Pancreas (tissue), 10 donors: ENCODE measurements at regions of chr12 and their contacts with region 1.

Region 1: GRCh38 chr12:22443379-22444316 is 100.7 kb downstream of the C2CD5 start:
- DNase-seq: peak in 5 of 6 donors; percentile 26 to 63 (median 45)
- ATAC-seq: peak; percentile 97 to 100 (median 99)
- H3K4me3 ChIP-seq: no peak overlapping the region
- H3K27ac ChIP-seq: no peak overlapping the region
- H3K4me1 ChIP-seq: no peaks in the 10 kb centered on the region
- H3K27me3 ChIP-seq: no peaks in the 10 kb centered on the region
- CTCF ChIP-seq: peak; percentile 38 to 65 (median 48)

Region 2: GRCh38 chr12:22083167-22083566 is 360.5 kb before region 1 on chr12:
- intact Hi-C with region 1: loop called in 1 of 3 experiments (anchors 10 kb)
- DNase-seq: no peak
- ATAC-seq: peak in 2 of 4 donors; percentile 47 to 56
- H3K4me3 ChIP-seq: no peak overlapping the region
- H3K27ac ChIP-seq: no peak overlapping the region
- H3K4me1 ChIP-seq: no peaks in the 10 kb centered on the region
- H3K27me3 ChIP-seq: no peaks in the 10 kb centered on the region
- CTCF ChIP-seq: peak in 2 of 4 donors; percentile 17

Region 3: GRCh38 chr12:22196236-22196635 is 247.4 kb before region 1 on chr12:
- intact Hi-C with region 1: no loop called
- DNase-seq: no peak
- ATAC-seq: no peak
- H3K4me3 ChIP-seq: no peak overlapping the region
- H3K27ac ChIP-seq: no peak overlapping the region
- H3K4me1 ChIP-seq: no peaks in the 10 kb centered on the region
- H3K27me3 ChIP-seq: no peaks in the 10 kb centered on the region
- CTCF ChIP-seq: no peak

Region 4: DNA sequence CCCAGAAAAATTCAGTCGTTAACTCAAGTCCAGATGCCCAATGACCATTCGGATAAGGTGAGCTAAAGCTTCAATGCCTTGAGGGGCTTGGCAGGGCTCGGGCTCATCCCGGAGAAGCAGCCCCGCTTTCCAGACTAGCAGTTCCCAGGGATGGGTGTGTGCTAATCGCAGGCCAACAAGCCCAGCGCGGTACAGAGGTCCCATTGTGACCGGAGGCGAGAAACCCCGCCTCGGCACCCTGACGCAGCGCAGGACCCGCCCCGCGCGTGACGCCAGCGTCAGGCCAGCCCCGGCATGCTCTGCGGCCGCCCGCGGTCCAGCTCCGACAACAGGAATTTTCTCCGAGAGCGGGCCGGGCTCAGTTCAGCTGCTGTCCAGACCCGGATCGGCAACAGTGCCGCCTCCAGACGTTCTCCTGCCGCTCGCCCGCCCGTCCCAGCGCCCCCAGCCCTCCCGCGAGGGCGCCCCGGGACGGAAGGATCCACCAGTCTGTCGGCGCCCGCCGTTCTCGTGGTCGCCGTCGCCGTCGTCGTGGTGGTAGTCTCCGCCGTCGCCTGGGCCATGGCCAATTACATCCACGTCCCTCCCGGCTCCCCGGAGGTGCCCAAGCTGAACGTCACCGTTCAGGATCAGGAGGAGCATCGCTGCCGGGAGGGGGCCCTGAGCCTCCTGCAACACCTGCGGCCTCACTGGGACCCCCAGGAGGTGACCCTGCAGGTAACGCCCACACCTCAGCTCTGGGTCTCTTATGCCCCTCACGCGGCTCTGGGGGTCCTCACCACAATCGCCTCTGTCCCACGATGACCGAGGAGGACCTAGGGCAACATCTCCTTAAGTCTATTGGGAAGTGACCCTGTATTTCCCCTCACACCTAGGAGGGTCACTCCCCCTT is 181.5 kb after region 1 on chr12 and contains the start of gene ETNK1:
- intact Hi-C with region 1: no loop called
- DNase-seq: peak; percentile 91 to 97 (median 94)
- ATAC-seq: peak; percentile 98 to 100 (median 99)
- H3K4me3 ChIP-seq: peak within 1 kb of the TSS; percentile 80 to 92 (median 88)
- H3K27ac ChIP-seq: peak within 1 kb of the TSS; percentile 97 to 99 (median 98)
- H3K4me1 ChIP-seq: peaks cover 2 to 42% (median 38%) of the 10 kb centered on the region in 3 donors
- H3K27me3 ChIP-seq: no peaks in the 10 kb centered on the region
- CTCF ChIP-seq: no peak
- total RNA-seq, gene ETNK1: 17.7 to 44.7 (median 23.8) TPM